Breast epithelium (tissue), 4 donors: ENCODE measurements at regions of chr15 and their contacts with region 1.

Region 1: DNA sequence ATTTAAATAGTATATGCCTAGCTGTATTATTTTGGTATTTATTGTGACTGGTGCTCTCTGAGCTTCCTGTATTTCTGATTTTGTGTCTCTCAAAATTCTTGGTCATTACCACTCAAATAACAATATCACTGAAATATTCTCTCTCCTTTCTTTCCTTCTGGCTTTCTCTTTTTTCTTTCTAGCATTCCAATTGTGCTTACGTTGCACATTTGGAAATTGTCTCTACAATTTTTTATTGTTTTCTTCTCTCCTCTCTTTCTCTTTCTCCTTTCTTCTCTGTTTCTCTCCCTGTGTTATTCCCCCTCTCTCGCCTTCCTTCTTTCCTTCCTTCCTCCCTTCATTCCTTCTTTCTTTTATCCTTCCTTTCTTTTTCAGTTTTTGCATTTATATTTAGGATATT is 89.6 kb upstream of the MCTP2 start:
- DNase-seq: no peak
- H3K4me3 ChIP-seq: no peak overlapping the region
- H3K27ac ChIP-seq: no peak overlapping the region
- H3K4me1 ChIP-seq: no peaks in the 10 kb centered on the region
- H3K27me3 ChIP-seq: no peaks in the 10 kb centered on the region
- CTCF ChIP-seq: no peak
- POLR2A ChIP-seq: no peak

Region 2: GRCh38 chr15:94061041-94061440 is 80.8 kb before region 1 on chr15:
- intact Hi-C with region 1: loop called (anchors 5 kb)
- DNase-seq: no peak
- H3K4me3 ChIP-seq: no peak overlapping the region
- H3K27ac ChIP-seq: no peak overlapping the region
- H3K4me1 ChIP-seq: no peaks in the 10 kb centered on the region
- H3K27me3 ChIP-seq: no peaks in the 10 kb centered on the region
- CTCF ChIP-seq: no peak
- POLR2A ChIP-seq: no peak